Left ventricle myocardium superior (tissue), 1 donor: ENCODE measurements at regions of chr17 and their contacts with region 1.

Region 1: GRCh38 chr17:77494664-77495435 is 354.1 kb downstream of the SEC14L1 start:
- DNase-seq: peak; percentile 86
- ATAC-seq: peak; percentile 64

Region 2: GRCh38 chr17:77331301-77331864 is 163.5 kb before region 1 on chr17:
- intact Hi-C with region 1: loop called (anchors 2 kb)
- DNase-seq: peak; percentile 96
- ATAC-seq: peak; percentile 86

Region 3: DNA sequence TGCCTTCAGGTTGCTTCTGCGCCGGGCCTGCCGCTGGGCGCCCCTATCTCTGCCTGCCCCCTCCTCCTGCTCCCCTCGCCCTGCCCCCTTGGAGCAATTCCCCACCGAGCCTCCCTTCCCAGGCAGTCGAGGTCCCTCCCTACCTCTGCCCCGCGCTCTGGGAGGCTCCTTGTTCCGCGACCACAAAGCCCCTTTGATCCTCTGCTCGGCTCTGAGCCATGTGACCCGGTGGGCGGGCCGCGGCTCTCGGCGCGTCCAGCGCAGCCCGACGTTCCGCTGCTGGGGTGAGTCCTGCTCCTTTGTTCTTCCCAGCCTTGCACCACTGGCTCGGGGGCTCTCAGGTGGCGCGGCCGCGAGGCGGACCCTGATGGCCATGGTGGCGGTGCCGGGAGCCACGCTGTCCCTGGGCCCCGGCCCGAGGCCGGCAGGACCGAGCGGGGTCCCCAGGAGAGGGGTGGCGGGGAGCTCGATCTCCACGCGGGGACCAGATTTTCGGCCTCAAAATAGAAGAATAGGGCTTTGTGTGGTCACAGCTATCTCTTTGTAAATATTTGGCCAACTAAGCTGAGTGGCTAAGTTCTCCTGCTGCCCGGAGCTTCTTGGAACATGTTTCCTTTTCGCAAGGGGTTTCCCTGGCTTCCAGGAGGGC is 43.5 kb before region 1 on chr17:
- intact Hi-C with region 1: no loop called
- DNase-seq: peak; percentile 83
- ATAC-seq: peak; percentile 75

Region 4: GRCh38 chr17:77546772-77547241 is 52.0 kb after region 1 on chr17:
- intact Hi-C with region 1: no loop called
- DNase-seq: no peak
- ATAC-seq: no peak

Region 5: DNA sequence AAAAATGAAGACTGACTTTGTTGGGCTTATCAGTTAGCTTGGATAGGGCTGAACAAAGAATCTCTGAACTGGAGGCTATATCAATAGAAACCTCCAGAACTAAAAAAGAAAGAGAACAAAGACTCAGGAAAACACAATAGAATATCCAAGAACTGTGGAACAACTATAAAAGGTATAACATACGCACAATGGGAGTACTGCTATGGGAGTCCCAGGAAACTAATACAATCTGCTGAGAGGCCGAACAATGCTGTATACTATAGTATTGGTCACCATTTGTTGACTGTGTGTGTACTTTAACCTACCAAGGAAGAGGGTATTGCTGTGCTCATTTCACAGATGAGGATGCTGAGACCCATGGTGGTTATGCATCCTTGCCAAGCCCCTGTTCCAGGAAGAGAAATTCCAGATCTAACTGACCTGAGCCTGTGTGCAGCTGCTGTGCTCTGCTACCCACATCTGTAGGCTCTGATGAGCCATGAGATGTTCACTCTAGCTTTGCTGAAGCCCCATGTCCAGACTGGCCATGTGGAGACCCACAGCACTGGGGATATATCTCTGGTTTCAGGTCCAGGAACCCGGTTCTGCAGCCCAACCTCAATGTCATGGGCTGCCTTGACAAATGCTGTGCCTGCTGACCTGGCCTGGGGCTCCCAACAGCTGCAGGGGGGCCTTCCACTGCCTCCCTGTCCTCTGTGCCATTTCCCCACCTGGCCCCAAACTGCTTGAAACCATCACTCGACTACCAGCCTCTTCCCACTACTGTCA is 209.4 kb after region 1 on chr17:
- intact Hi-C with region 1: no loop called
- DNase-seq: no peak
- ATAC-seq: no peak

Region 6: DNA sequence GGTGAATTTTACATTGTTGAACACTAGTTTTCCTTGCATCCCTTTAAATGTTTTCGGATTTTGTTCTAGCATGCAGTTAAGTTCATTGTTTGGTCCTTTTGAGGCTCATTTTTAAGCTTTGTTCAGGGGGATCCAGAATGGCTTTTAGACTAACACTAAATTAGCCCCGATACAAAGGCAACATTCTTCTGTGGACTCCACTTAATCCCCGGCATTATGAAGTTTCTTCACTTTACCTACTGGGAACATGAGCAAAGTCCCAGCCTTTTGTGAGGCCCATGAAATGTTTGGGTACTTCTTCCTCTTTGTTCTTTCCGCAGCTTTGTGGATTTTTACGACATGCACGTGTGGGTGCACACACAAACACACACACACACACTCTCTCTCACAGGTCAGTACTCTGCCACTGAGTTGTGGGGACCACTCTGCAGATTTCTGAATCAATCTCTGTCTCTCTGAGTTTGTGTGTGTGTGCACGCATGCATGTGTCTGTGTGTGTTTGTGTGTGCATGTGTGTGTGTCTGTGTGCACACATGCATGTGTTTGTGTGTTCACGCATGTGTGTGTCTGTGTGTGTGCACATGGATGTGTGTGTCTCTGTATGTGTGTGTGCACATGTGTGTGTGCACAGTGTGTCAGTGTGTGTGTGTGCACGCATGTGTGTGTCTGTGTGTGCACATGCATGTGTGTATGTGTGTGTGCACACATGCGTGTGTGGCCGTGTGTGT is 223.3 kb after region 1 on chr17:
- intact Hi-C with region 1: no loop called
- DNase-seq: no peak
- ATAC-seq: no peak